SK-N-SH (cell line): ENCODE measurements at regions of chr10 and their contacts with region 1.

Region 1: DNA sequence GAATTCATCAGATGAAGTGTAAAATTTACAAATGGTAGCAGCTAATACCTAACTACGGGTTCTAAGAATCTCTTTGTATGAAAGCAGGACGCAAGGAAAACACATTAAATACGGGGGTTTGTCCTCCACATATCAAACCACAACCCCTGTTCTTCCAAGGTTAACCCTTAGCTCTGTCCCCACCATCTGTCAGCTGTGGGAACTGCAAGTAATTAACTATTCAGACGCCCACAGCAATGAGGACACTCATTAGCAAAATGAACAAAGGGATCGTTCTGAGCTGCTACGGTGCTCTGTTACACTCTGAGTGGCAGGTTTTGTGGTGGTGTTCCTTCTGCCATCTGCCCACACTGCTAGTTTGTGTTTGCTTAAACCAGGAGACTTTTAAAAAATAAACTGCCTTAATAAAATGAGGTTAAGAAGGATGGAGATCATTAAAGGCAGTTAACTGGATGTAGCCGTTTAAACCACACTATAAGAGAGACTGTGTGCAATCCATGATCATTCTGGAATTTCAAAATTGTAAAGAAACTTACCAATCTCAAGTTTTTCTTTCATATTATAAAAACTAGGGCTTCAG is 51.4 kb downstream of the C10orf67 start:
- DNase-seq: peak; percentile 70
- H3K4me3 ChIP-seq: no peak overlapping the region
- H3K27ac ChIP-seq: no peak overlapping the region
- H3K4me1 ChIP-seq: no peaks in the 10 kb centered on the region; a peak in 1 of 4 replicates
- H3K27me3 ChIP-seq: no peaks in the 10 kb centered on the region
- CTCF ChIP-seq: peak; percentile 72
- EP300 ChIP-seq: no peak
- RAD21 ChIP-seq: peak; percentile 73

Region 2: GRCh38 chr10:23230582-23230981 is 62.7 kb before region 1 on chr10:
- CTCF ChIA-PET with region 1: no interaction called
- POLR2A ChIA-PET with region 1: no interaction called
- DNase-seq: no peak
- H3K4me3 ChIP-seq: no peak overlapping the region
- H3K27ac ChIP-seq: no peak overlapping the region
- H3K4me1 ChIP-seq: no peaks in the 10 kb centered on the region
- H3K27me3 ChIP-seq: no peaks in the 10 kb centered on the region
- CTCF ChIP-seq: no peak
- EP300 ChIP-seq: no peak
- RAD21 ChIP-seq: no peak

Region 3: DNA sequence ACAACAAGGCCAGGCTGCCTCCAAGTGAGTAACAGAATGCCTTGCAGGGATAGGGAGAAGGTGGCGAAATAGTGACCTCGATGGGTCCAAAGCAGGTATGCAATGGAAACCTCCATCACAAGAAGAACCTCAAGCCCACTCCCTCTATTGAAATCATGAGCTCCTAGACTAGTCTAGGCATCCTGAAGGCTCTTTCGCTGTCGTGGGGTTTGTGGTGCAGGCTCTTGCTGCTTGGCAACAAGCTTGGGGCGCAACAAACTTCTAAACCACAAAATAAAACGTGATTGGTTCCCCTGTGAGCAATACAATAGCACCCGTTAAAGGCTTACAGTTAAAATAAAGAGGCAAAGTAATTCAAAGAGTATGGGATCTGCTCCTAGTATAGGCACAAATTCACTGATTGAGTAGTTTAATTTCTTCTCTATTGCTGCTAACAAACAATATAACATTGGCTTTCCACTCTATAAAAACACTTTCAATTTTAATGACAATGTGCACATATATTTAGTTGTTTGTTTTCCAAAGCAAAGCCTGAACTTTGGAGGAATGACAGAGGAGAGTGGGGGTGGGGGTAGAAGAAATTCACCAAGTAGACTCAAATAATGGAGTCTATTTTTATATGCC is 12.7 kb before region 1 on chr10:
- CTCF ChIA-PET with region 1: interaction called, 15 read pairs
- POLR2A ChIA-PET with region 1: no interaction called
- DNase-seq: no peak
- H3K4me3 ChIP-seq: no peak overlapping the region
- H3K27ac ChIP-seq: no peak overlapping the region
- H3K4me1 ChIP-seq: no peaks in the 10 kb centered on the region
- H3K27me3 ChIP-seq: no peaks in the 10 kb centered on the region
- CTCF ChIP-seq: no peak
- EP300 ChIP-seq: no peak
- RAD21 ChIP-seq: no peak

Region 4: GRCh38 chr10:23368816-23369640 is 75.8 kb after region 1 on chr10:
- CTCF ChIA-PET with region 1: no interaction called
- POLR2A ChIA-PET with region 1: no interaction called
- DNase-seq: no peak
- H3K4me3 ChIP-seq: no peak overlapping the region
- H3K27ac ChIP-seq: no peak overlapping the region
- H3K4me1 ChIP-seq: peaks cover 0 to 3% of the 10 kb centered on the region in 2 experiments; a peak in 1 of 4 replicates
- H3K27me3 ChIP-seq: no peaks in the 10 kb centered on the region
- CTCF ChIP-seq: no peak
- EP300 ChIP-seq: no peak
- RAD21 ChIP-seq: no peak

Region 5: GRCh38 chr10:23525406-23525805 is 232.2 kb after region 1 on chr10:
- CTCF ChIA-PET with region 1: interaction called, 23 read pairs
- POLR2A ChIA-PET with region 1: no interaction called
- DNase-seq: peak; percentile 37
- H3K4me3 ChIP-seq: no peak overlapping the region
- H3K27ac ChIP-seq: no peak overlapping the region
- H3K4me1 ChIP-seq: no peaks in the 10 kb centered on the region
- H3K27me3 ChIP-seq: no peaks in the 10 kb centered on the region
- CTCF ChIP-seq: peak; percentile 54
- EP300 ChIP-seq: no peak
- RAD21 ChIP-seq: peak; percentile 84